GM13977 (cell line): ENCODE measurements at regions of chr11 and their contacts with region 1.

Region 1: GRCh38 chr11:86291466-86292262 is 10.4 kb upstream of the HIKESHI start:
- DNase-seq: peak; percentile 38
- CTCF ChIP-seq: peak; percentile 65

Region 2: DNA sequence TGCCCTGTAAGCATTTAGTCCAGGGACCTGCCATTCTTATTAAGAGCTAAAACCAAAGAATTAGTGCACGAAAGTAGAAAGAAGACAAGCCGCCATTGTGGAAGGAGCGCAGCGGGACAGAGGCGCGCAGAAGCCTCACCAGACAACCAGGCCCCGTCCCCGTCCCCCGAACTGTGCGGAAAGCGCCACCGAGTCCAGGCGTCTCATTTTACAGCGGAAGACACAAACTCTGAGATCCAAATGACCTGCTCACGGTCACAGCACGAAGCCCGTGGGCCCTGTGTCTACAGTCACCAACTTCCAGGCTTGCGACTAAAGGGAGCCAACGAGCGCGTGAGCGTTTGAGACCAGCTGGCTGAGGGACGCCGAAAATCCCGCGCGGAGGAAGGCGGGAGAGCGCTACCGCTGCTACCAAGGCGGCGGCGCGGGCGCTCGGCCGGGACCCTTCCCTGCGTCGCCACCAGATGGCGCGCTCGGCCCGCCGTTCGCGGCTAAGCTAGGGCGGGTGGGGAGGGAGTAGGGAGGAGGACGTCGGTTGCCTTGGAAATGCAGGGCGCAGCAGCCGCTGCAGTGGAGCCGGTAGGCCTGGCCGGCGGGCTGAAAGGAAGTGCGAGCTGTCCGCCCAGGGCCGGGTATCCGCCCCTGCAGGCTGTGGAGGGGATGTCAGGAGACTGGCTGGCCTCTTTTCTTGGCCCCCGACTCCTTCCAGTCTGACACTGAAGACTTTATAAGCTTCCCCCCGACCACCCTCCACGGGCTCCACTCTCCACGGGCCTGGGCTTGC is 436.9 kb before region 1 on chr11:
- in situ Hi-C with region 1: loop called (anchors 25 kb)
- DNase-seq: peak; percentile 93
- CTCF ChIP-seq: peak; percentile 87

Region 3: GRCh38 chr11:85941380-85941973 is 350.2 kb before region 1 on chr11:
- in situ Hi-C with region 1: loop called (anchors 10 kb)
- DNase-seq: peak; percentile 59
- CTCF ChIP-seq: peak; percentile 59